PC-3 (cell line): ENCODE measurements at regions of chr5 and their contacts with region 1.

Region 1: GRCh38 chr5:171272996-171273970 is 35.8 kb upstream of the TLX3 start:
- DNase-seq: peak; percentile 60
- ATAC-seq: peak; percentile 81
- H3K4me3 ChIP-seq: no peak overlapping the region
- H3K27ac ChIP-seq: no peak overlapping the region
- H3K4me1 ChIP-seq: no peaks in the 10 kb centered on the region
- H3K27me3 ChIP-seq: no peaks in the 10 kb centered on the region
- CTCF ChIP-seq: peak; percentile 77

Region 2: DNA sequence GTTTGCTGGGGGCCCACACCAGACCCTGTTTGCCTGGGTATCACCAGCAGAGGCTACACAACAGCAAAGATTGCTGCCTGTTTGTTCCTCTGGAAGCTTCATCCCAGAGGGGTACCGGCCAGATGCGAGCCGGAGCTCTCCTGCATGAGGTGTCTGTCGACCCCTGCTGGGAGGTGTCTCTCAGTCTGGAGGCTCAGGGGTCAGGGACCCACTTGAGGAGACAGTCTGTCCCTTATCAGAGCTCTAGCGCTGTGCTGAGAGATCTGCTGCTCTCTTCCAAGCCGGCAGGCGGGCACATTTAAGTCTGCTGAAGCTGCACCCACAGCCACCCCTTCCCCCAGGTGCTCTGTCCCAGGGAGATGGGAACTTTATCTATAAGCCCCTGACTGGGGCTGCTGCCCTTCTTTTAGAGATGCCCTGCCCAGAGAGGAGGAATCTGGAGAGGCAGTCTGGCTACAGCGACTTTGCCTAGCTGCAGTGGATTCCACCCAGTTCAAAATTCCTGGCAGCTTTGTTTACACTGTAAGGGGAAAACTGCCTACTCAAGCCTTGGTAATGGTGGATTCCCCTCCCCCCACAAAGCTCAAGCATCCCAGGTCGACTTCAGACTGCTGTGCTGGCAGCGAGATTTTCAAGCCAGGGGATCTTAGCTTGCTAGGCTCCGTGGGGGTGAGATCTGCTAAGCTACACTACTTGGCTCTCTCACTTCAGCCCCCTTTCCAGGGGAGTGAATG is 170.2 kb before region 1 on chr5:
- CTCF ChIA-PET with region 1: no interaction called
- POLR2A ChIA-PET with region 1: no interaction called
- intact Hi-C with region 1: no loop called
- DNase-seq: no peak
- ATAC-seq: no peak
- H3K4me3 ChIP-seq: no peak overlapping the region
- H3K27ac ChIP-seq: no peak overlapping the region
- H3K4me1 ChIP-seq: no peaks in the 10 kb centered on the region
- H3K27me3 ChIP-seq: no peaks in the 10 kb centered on the region
- CTCF ChIP-seq: no peak

Region 3: GRCh38 chr5:171207256-171207847 is 65.9 kb before region 1 on chr5:
- CTCF ChIA-PET with region 1: no interaction called
- POLR2A ChIA-PET with region 1: no interaction called
- intact Hi-C with region 1: loop called (anchors 5 kb)
- DNase-seq: peak; percentile 84
- ATAC-seq: peak; percentile 67
- H3K4me3 ChIP-seq: no peak overlapping the region
- H3K27ac ChIP-seq: no peak overlapping the region
- H3K4me1 ChIP-seq: no peaks in the 10 kb centered on the region
- H3K27me3 ChIP-seq: 0 out of 2 replicates have a peak, but pooled peaks cover 3% of the 10 kb centered on the region
- CTCF ChIP-seq: peak; percentile 91

Region 4: DNA sequence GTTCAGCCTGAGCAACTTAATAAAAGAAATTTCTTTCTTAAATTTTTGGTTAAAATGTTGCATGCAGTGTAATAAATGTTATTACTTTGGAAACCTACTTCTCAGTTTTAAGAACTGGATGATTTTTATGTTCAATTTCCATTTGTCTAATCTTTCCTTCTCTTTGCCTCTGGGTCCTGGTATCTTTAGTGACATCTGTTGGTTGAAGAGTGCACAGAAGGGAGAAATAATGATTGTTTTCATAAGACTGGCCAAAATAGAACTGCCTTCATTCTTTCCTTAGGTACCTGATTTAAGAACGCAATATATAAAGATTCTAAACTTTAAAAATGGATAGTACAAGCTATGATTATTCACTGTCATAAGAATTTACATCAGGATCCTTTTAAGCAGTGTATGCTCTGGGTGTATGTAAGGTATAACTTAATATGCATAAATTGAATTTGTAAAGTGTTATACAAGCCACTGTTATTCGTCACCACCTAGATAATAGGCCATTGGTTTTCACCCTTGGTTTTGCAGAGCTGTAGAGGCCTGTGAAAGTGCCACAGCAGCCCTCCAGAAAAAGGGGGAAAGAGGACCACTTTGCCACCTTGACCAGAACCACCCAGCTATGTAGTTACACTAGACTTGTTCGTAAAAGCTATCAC is 47.1 kb before region 1 on chr5:
- CTCF ChIA-PET with region 1: no interaction called
- POLR2A ChIA-PET with region 1: no interaction called
- intact Hi-C with region 1: loop called (anchors 2 kb)
- DNase-seq: peak; percentile 28
- ATAC-seq: peak; percentile 65
- H3K4me3 ChIP-seq: no peak overlapping the region
- H3K27ac ChIP-seq: no peak overlapping the region
- H3K4me1 ChIP-seq: no peaks in the 10 kb centered on the region
- H3K27me3 ChIP-seq: no peaks in the 10 kb centered on the region
- CTCF ChIP-seq: peak; percentile 64

Region 5: GRCh38 chr5:171365351-171365750 is 92.1 kb after region 1 on chr5:
- CTCF ChIA-PET with region 1: no interaction called
- POLR2A ChIA-PET with region 1: no interaction called
- intact Hi-C with region 1: no loop called
- DNase-seq: no peak
- ATAC-seq: no peak
- H3K4me3 ChIP-seq: no peak overlapping the region
- H3K27ac ChIP-seq: no peak overlapping the region
- H3K4me1 ChIP-seq: no peaks in the 10 kb centered on the region
- H3K27me3 ChIP-seq: no peaks in the 10 kb centered on the region; the same call in 1 of the 2 replicates
- CTCF ChIP-seq: peak; percentile 49

Region 6: DNA sequence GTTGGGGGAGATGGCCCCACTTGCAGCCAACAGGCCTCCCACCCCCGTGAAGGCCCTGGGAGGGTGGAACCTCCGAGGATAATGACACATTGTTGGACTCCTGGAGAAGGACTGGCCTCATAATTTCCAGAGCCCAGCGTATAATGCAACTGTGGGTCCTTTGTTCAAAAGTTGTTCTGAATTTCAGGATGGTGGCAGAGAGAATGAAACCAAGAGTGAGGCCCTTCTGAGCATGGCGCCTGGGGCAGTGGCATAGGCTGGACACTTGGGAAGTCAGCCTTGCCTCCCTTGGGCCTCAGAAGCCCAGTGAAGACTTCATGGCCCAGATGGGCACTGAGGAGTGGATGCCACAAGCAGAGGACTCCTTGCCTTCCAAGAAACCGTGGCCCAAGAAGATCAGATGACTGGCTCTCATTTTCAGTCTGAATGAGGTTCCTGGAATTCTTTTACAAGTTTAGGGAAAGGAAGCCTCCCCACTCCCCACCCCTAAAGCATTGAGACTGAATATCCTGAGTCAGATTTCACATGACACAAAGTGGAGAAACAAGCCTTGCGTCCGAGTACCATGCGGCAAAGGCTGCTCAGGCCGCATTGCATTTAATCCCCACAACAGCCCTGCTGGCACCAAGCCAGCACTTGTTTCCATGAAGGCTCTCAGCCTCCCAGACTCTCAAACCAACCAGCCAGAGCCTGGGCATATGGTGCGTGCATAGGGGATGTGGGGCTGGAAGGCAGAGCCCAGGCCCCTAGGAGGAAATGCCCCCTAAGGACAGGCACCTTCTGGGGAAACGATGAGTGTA is 415.6 kb after region 1 on chr5:
- CTCF ChIA-PET with region 1: no interaction called
- POLR2A ChIA-PET with region 1: no interaction called
- intact Hi-C with region 1: no loop called
- DNase-seq: no peak
- ATAC-seq: no peak
- H3K4me3 ChIP-seq: no peak overlapping the region
- H3K27ac ChIP-seq: no peak overlapping the region
- H3K4me1 ChIP-seq: no peaks in the 10 kb centered on the region
- H3K27me3 ChIP-seq: peaks cover 23% of the 10 kb centered on the region
- CTCF ChIP-seq: no peak